Heart right ventricle (tissue), 16 donors: ENCODE measurements at regions of chr16 and their contacts with region 1.

Region 1: GRCh38 chr16:70364399-70364798 is 17.7 kb downstream of the DDX19A start:
- DNase-seq: no peak
- ATAC-seq: no peak
- H3K4me3 ChIP-seq: no peak overlapping the region
- H3K27ac ChIP-seq: no peak overlapping the region
- H3K4me1 ChIP-seq: no peaks in the 10 kb centered on the region
- H3K27me3 ChIP-seq: no peaks in the 10 kb centered on the region
- CTCF ChIP-seq: no peak

Region 2: DNA sequence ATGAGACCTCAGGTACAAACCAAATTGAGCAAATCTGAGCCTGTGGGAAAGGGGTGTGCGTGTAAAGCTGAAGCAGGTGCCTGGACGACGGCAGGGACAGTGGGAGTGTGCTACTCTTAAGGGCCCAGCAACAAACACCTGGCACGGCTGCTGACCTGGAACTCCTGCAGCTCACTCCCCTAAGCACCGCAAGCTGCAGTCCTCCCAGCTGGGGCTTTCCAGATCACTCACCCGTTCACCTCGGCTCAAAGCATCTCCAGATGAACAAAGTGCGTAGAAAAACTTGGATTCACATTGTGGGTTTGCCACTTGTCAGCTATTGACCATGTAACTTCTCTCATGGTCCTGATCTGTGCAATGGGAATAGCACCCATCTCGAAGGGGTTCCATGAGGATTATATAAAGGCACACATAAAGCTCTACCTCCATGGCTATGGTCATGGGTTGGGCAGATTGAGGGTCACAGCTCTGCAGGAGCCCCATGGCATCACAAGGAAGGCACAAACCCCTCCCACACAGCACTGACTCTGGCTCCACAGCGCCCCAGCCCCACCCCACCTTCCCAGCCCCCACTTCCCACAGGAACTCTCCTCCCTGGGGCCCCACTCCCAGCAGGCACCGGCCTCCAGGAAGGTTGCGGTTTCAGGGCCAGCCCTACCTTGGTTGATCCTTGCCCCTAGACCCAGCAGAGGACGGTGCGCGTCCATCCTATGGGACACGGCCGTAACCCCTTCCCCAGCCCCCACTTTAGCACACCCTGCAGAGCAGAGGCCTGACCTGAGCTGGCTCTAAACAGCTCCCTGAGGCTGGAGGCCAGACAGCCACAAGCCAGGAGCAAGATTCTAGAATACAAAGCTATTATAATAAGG is 52.6 kb after region 1 on chr16:
- intact Hi-C with region 1: no loop called
- DNase-seq: no peak
- ATAC-seq: peak in 3 of 8 donors; percentile 5 to 19 (median 9)
- H3K4me3 ChIP-seq: no peak overlapping the region
- H3K27ac ChIP-seq: peak overlapping the region in 1 of 10 donors; percentile 22
- H3K4me1 ChIP-seq: peaks cover 6 to 76% (median 51%) of the 10 kb centered on the region in 9 donors
- H3K27me3 ChIP-seq: no peaks in the 10 kb centered on the region
- CTCF ChIP-seq: no peak

Region 3: GRCh38 chr16:70490261-70490803 is 125.9 kb after region 1 on chr16:
- intact Hi-C with region 1: loop called in 1 of 10 experiments (anchors 10 kb)
- DNase-seq: no peak
- ATAC-seq: peak in 5 of 8 donors; percentile 34 to 78 (median 52)
- H3K4me3 ChIP-seq: no peak overlapping the region
- H3K27ac ChIP-seq: no peak overlapping the region
- H3K4me1 ChIP-seq: peaks cover 0 to 15% (median 8%) of the 10 kb centered on the region in 9 donors
- H3K27me3 ChIP-seq: no peaks in the 10 kb centered on the region
- CTCF ChIP-seq: no peak

Region 4: DNA sequence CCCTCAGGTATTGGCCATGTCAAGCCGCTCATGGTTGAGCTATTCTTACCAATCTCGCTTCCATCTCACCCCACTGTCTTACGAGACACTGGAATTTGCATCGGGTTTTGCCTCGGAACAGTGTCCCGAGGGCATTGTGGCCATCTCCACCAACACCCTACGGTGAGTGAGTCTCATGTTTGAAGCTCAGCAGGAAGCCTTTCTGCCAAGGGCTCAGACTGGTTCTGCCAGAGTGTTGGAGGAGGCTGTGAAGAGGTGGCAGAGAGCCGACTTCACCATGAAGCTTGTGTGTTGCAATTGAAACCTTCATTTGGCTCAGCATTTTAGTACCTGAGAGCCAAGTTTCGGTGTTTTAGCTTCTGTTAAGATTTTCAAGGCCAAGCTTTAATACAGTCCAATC is 197.2 kb after region 1 on chr16:
- intact Hi-C with region 1: loop called in 1 of 10 experiments (anchors 10 kb)
- DNase-seq: no peak
- ATAC-seq: no peak
- H3K4me3 ChIP-seq: no peak overlapping the region
- H3K27ac ChIP-seq: no peak overlapping the region
- H3K4me1 ChIP-seq: peaks cover 0 to 3% (median 0%) of the 10 kb centered on the region in 9 donors
- H3K27me3 ChIP-seq: no peaks in the 10 kb centered on the region
- CTCF ChIP-seq: no peak